ENCODE measurements at regions of chr9 and their contacts with region 1.

Region 1: GRCh38 chr9:115883457-115884329 is 269.9 kb upstream of the PAPPA start:
- DNase-seq: no peak
- ATAC-seq: peak; percentile 63
- H3K4me3 ChIP-seq: no peak overlapping the region
- H3K27ac ChIP-seq: no peak overlapping the region
- H3K4me1 ChIP-seq: no peaks in the 10 kb centered on the region
- H3K27me3 ChIP-seq: no peaks in the 10 kb centered on the region
- CTCF ChIP-seq: peak; percentile 26 to 44 (median 32); a peak in 4 of 6 replicates
- EP300 ChIP-seq: no peak
- POLR2A ChIP-seq: no peak
- RAD21 ChIP-seq: peak; percentile 42; the same call in 1 of the 2 replicates

Region 2: DNA sequence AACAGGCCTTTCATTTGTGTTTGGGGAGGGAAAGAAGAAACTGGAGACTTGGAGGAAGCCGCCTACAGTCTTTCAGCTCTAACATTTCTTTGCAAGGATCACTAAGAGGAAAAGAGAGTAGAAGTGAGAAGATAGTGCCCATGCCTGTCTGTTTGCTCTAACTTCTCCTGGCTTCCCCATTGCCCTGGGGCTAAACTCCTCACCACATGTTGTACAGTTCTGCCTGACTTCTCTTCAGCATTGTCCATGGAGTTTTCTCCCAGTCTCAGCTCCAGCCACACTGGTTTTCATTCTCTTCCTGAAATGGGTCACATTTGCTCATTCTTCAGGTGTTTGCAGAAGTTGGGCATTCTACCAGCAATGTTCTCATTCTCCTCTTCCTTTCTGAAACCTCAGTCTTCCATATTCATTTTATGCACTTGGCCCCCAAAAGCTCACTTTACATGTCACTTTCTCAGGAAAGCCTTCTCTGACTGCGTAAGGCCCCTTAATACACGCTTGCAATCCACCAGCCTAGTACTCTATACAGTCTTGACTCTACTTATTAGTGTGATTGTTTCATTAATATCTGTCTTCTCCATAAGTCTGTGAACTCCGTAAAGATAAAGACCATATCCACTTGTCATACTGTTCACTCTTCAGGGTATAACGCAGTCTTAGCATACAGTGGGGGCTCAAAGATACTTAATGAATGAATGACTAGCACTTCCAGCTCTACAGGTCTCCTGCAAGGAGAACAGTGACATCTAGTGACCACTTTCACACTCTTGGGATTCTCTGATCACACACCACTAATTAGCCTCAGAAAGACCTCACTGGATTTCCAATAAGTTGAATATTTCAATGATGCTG is 763.2 kb after region 1 on chr9:
- CTCF ChIA-PET with region 1: no interaction called
- POLR2A ChIA-PET with region 1: no interaction called
- RAD21 ChIA-PET with region 1: no interaction called
- SMC1A ChIA-PET with region 1: no interaction called
- in situ Hi-C with region 1: no loop called
- intact Hi-C with region 1: loop called (anchors 5 kb)
- DNase-seq: no peak
- ATAC-seq: peak; percentile 75
- H3K4me3 ChIP-seq: no peak overlapping the region
- H3K27ac ChIP-seq: no peak overlapping the region
- H3K4me1 ChIP-seq: no peaks in the 10 kb centered on the region
- H3K27me3 ChIP-seq: no peaks in the 10 kb centered on the region
- CTCF ChIP-seq: peak; percentile 46 to 57 (median 49); a peak in 5 of 6 replicates
- EP300 ChIP-seq: no peak
- POLR2A ChIP-seq: no peak
- RAD21 ChIP-seq: peak; percentile 68

Measured in GM12878 (cell line).